WTC11 (cell line): ENCODE measurements at regions of chr3 and their contacts with region 1.

Region 1: GRCh38 chr3:122101646-122102045 is 46.5 kb downstream of the CD86 start:
- DNase-seq: no peak
- ATAC-seq: peak; percentile 86
- H3K4me3 Mint-ChIP-seq: no peak overlapping the region
- H3K27ac Mint-ChIP-seq: no peak overlapping the region
- H3K4me1 Mint-ChIP-seq: peaks cover 4% of the 10 kb centered on the region; the same call in 1 of the 2 replicates
- H3K27me3 Mint-ChIP-seq: no peaks in the 10 kb centered on the region
- CTCF ChIP-seq: no peak; the same call in 1 of the 2 replicates

Region 2: GRCh38 chr3:121545574-121546455 is 555.8 kb before region 1 on chr3 and contains the start of gene POLQ:
- CTCF ChIA-PET with region 1: interaction called, 18 read pairs
- POLR2A ChIA-PET with region 1: no interaction called
- DNase-seq: peak; percentile 83
- ATAC-seq: peak; percentile 94
- H3K4me3 Mint-ChIP-seq: peak within 1 kb of the TSS; percentile 98
- H3K27ac Mint-ChIP-seq: peak within 1 kb of the TSS; percentile 94
- H3K4me1 Mint-ChIP-seq: peaks cover 20% of the 10 kb centered on the region
- H3K27me3 Mint-ChIP-seq: no peaks in the 10 kb centered on the region
- CTCF ChIP-seq: no peak
- total RNA-seq, gene POLQ: 14.9 to 16.8 TPM (median 16.2 TPM) in 3 replicates

Region 3: DNA sequence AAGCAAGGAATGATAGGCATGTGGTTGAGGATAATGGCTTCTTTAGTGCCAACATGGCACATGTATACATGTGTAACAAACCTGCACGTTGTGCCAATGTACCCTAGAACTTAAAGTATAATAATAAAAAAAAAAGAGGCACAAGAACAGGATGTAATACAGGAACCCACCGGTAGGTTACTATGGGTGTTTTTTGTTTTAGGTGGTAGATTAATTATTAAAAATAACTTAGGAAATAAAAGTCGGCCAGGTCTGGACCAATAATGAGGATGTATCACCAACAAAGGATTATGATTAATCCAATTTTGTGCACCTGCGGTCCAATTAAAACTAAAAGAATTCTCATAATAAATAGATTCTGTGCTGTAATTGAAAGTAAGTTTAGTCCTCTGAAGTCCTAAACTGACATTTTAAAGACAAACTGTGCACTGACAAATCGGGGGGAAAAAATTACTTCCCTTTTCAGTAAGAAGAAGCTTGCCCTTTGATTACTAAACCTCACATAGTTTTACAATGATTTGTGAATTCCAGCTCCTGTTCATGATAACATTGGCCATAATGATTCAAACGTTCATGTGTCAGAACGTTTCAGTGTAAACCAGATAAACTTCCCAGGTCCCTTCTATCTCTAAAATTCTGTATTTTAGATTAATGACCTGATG is 144.0 kb after region 1 on chr3:
- CTCF ChIA-PET with region 1: no interaction called
- POLR2A ChIA-PET with region 1: no interaction called
- DNase-seq: no peak
- ATAC-seq: no peak
- H3K4me3 Mint-ChIP-seq: no peak overlapping the region
- H3K27ac Mint-ChIP-seq: no peak overlapping the region
- H3K4me1 Mint-ChIP-seq: no peaks in the 10 kb centered on the region
- H3K27me3 Mint-ChIP-seq: no peaks in the 10 kb centered on the region; the same call in 1 of the 2 replicates
- CTCF ChIP-seq: no peak

Region 4: DNA sequence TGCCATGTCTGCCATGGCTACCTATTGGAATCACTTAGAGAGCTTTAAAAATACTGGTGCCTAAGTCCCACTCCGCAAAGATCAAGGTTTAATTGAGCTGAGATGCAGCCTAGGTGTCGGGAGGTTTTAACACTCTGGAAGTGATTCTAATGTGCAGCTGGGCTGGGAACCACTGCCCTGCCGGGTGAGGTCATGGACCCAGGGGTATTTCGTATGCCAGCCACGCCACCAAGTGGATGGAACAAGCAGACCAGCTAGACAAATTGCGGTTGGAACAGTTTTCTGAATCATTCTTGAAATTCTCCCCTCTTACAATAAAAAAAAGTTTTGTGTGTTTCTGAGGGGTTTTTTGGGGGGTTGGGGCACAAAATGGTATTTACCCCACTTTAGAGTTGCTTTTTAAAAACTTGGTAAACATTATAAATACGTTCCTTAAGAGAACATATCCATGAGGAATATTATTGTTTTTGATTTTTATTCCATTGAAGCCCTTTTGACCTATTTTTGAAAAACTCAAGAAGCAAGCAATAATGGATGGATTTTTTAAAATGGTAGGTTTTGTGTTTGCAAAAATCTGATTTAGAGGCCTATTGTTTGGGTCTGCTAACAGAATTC is 157.2 kb after region 1 on chr3:
- CTCF ChIA-PET with region 1: interaction called, 36 read pairs
- POLR2A ChIA-PET with region 1: no interaction called
- DNase-seq: peak; percentile 71
- ATAC-seq: peak; percentile 92
- H3K4me3 Mint-ChIP-seq: no peak overlapping the region
- H3K27ac Mint-ChIP-seq: no peak overlapping the region
- H3K4me1 Mint-ChIP-seq: peaks cover 8% of the 10 kb centered on the region
- H3K27me3 Mint-ChIP-seq: no peaks in the 10 kb centered on the region
- CTCF ChIP-seq: no peak

Region 5: DNA sequence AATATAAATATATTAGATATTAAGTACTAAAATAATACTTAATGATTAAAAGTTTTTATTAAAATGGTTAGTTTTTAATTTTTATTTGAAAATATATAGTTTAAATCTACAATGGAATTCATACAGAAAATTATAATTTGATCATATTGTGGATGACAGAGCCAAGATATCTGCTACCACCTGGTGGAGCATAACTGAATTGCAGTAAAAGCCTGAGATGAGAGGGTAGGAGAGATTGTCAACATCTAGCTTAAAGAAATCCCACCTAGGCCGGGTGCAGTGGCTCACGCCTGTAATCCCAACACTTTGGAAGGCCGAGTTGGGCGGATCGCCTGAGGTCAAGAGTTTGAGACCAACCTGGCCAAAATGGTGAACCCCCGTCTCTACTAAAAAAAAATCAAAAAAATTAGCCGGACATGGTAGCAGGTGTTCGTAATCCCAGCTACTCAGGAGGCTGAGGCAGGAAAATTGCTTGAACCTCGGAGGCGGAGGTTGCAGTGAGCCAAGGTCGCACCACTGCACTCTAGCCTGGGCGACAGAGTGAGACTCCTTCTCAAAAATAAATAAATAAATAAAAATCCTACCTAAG is 198.3 kb after region 1 on chr3:
- CTCF ChIA-PET with region 1: interaction called, 27 read pairs
- POLR2A ChIA-PET with region 1: no interaction called
- DNase-seq: peak; percentile 35
- ATAC-seq: peak; percentile 73
- H3K4me3 Mint-ChIP-seq: no peak overlapping the region
- H3K27ac Mint-ChIP-seq: no peak overlapping the region
- H3K4me1 Mint-ChIP-seq: no peaks in the 10 kb centered on the region
- H3K27me3 Mint-ChIP-seq: no peaks in the 10 kb centered on the region
- CTCF ChIP-seq: peak; percentile 61; the same call in 1 of the 2 replicates

Region 6: DNA sequence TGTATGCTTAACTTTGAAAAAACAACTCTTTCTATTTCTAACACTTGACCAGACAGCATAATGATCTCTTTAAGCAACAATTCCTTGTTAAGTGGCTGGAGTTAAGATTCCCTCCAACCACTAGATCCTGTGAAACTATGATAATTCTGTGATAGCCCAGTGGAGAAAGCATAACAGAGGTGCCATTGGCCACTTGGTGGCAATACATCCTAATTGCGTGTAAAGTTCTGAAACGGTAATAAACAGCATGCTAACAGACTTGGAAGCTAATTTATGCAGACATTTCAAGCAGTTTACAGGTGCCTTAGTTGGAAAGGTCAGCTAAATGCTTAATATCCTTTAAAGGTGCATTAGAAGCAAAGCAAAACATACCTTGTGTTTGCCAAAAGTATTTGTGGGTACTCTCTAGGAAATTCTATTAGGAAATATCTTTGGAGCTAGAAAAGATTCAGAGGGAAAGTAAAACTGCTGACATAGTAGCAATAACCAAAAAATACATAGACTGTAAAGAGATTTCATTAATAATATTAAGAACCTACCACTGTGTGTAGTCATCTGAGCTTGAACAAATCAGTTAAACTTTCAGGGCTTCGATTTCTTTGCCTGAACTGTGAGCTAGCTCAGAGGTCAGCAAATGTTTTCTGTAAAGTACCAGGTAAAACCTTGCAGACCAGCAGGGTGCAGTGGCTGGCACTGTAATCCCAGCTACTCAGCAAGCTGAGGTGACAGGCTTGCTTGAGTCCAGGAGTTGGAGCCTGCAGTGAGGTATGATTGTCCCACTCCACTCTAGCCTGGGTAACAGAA is 204.4 kb after region 1 on chr3:
- CTCF ChIA-PET with region 1: interaction called, 11 read pairs
- POLR2A ChIA-PET with region 1: no interaction called
- DNase-seq: peak; percentile 30
- ATAC-seq: peak; percentile 87
- H3K4me3 Mint-ChIP-seq: no peak overlapping the region
- H3K27ac Mint-ChIP-seq: no peak overlapping the region
- H3K4me1 Mint-ChIP-seq: no peaks in the 10 kb centered on the region
- H3K27me3 Mint-ChIP-seq: no peaks in the 10 kb centered on the region
- CTCF ChIP-seq: no peak

Region 7: GRCh38 chr3:122356415-122356814 is 254.8 kb after region 1 on chr3:
- CTCF ChIA-PET with region 1: interaction called, 13 read pairs
- POLR2A ChIA-PET with region 1: no interaction called
- DNase-seq: peak; percentile 58
- ATAC-seq: peak; percentile 80
- H3K4me3 Mint-ChIP-seq: no peak overlapping the region
- H3K27ac Mint-ChIP-seq: no peak overlapping the region
- H3K4me1 Mint-ChIP-seq: no peaks in the 10 kb centered on the region
- H3K27me3 Mint-ChIP-seq: no peaks in the 10 kb centered on the region
- CTCF ChIP-seq: no peak